ENCODE measurements at regions of chr1 and their contacts with region 1.

Region 1: DNA sequence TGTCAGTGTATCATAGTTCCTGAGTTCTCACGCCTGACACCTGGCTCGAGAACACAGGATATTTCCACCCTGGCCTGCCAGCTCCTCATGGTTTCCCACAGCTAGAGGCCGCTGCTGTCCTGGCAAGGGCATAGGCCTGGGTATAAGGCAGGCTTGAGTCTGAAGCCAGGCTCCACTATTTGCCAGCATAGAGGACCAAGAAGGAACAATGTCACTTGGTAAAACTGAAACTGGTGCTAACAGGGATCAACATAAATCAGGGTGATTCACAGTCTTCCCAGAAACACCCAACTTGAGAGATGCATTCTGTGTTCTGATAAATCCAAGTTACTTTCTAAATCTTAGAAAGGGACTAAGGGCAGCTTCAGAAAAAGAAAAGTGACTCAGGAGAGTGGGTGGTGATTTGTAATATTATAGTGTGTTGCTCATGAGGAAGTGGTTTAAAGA is 6.9 kb upstream of the S100A2 start:
- DNase-seq: peak in 1 of 2 experiments; percentile 43
- H3K4me3 ChIP-seq: no peak overlapping the region
- H3K27ac ChIP-seq: no peak overlapping the region
- H3K4me1 ChIP-seq: peaks cover 4 to 8% (median 7%) of the 10 kb centered on the region in 4 experiments; a peak in 6 of 7 replicates
- H3K27me3 ChIP-seq: 0 out of 7 replicates have a peak, but pooled peaks cover 0 to 4% (median 0%) of the 10 kb centered on the region in 4 experiments
- CTCF ChIP-seq: peak; percentile 91 to 95 (median 92)
- EP300 ChIP-seq: no peak
- POLR2A ChIP-seq: no peak
- RAD21 ChIP-seq: peak; percentile 93 to 97

Region 2: GRCh38 chr1:153526132-153526543 is 46.5 kb before region 1 on chr1:
- CTCF ChIA-PET with region 1: interaction called, 123 read pairs
- POLR2A ChIA-PET with region 1: no interaction called
- DNase-seq: no peak
- H3K4me3 ChIP-seq: no peak overlapping the region
- H3K27ac ChIP-seq: no peak overlapping the region
- H3K4me1 ChIP-seq: peaks cover 3 to 5% (median 5%) of the 10 kb centered on the region in 4 experiments; a peak in 3 of 7 replicates
- H3K27me3 ChIP-seq: no peaks in the 10 kb centered on the region
- CTCF ChIP-seq: no peak
- EP300 ChIP-seq: no peak
- POLR2A ChIP-seq: no peak
- RAD21 ChIP-seq: no peak

Region 3: DNA sequence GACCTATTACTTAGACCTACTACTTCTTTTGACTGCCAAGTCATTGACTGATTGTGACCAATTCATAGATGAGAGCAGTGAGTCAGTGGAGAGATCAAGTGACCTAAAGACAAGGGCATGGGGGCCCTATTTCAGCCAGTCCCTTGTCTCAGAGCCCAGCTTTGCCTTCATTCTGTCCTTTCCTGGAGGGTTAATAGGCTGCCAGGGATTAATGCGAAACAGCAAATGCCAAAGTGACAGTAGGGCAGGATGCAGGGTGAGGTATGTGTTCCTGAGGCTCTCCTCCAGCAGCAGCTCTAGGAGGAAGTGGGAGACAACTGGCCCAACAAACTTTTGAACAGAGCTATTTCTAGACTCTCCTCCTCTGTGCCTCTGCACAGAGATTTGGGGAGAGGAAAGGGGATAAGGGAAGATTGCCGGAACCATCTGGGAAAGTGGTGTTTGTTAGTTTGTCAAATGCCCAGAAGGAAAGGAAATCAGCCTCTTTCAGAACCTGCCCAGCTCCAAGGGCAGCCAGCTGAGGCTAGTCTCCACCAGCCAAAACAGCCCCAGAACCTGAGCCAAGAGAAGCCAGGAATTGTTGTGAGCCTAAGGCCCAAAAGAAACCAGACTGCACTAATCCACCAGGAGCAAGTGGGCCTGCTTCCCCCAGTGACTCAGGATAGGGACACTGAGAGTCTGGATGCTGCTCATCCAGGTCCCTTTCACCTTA is 18.6 kb before region 1 on chr1:
- CTCF ChIA-PET with region 1: interaction called, 38 read pairs
- POLR2A ChIA-PET with region 1: no interaction called
- DNase-seq: no peak
- H3K4me3 ChIP-seq: no peak overlapping the region
- H3K27ac ChIP-seq: no peak overlapping the region
- H3K4me1 ChIP-seq: peaks cover 0 to 9% (median 0%) of the 10 kb centered on the region in 4 experiments; a peak in 1 of 7 replicates
- H3K27me3 ChIP-seq: no peaks in the 10 kb centered on the region; a peak in 2 of 7 replicates
- CTCF ChIP-seq: no peak
- EP300 ChIP-seq: no peak
- POLR2A ChIP-seq: no peak
- RAD21 ChIP-seq: no peak

Region 4: GRCh38 chr1:153617675-153618074 is 45.1 kb after region 1 on chr1:
- CTCF ChIA-PET with region 1: interaction called, 224 read pairs
- POLR2A ChIA-PET with region 1: interaction called, 7 read pairs
- DNase-seq: peak; percentile 54 to 89
- H3K4me3 ChIP-seq: no peak overlapping the region
- H3K27ac ChIP-seq: no peak overlapping the region
- H3K4me1 ChIP-seq: peaks cover 0 to 13% (median 5%) of the 10 kb centered on the region in 4 experiments; a peak in 6 of 7 replicates
- H3K27me3 ChIP-seq: no peaks in the 10 kb centered on the region
- CTCF ChIP-seq: peak; percentile 93 to 99 (median 94)
- EP300 ChIP-seq: no peak
- POLR2A ChIP-seq: no peak
- RAD21 ChIP-seq: peak; percentile 67 to 83

Region 5: GRCh38 chr1:153717330-153717729 is 144.7 kb after region 1 on chr1:
- CTCF ChIA-PET with region 1: no interaction called
- POLR2A ChIA-PET with region 1: no interaction called
- DNase-seq: no peak
- H3K4me3 ChIP-seq: no peak overlapping the region
- H3K27ac ChIP-seq: no peak overlapping the region
- H3K4me1 ChIP-seq: no peaks in the 10 kb centered on the region
- H3K27me3 ChIP-seq: no peaks in the 10 kb centered on the region
- CTCF ChIP-seq: no peak
- EP300 ChIP-seq: no peak
- POLR2A ChIP-seq: no peak
- RAD21 ChIP-seq: no peak

Region 6: DNA sequence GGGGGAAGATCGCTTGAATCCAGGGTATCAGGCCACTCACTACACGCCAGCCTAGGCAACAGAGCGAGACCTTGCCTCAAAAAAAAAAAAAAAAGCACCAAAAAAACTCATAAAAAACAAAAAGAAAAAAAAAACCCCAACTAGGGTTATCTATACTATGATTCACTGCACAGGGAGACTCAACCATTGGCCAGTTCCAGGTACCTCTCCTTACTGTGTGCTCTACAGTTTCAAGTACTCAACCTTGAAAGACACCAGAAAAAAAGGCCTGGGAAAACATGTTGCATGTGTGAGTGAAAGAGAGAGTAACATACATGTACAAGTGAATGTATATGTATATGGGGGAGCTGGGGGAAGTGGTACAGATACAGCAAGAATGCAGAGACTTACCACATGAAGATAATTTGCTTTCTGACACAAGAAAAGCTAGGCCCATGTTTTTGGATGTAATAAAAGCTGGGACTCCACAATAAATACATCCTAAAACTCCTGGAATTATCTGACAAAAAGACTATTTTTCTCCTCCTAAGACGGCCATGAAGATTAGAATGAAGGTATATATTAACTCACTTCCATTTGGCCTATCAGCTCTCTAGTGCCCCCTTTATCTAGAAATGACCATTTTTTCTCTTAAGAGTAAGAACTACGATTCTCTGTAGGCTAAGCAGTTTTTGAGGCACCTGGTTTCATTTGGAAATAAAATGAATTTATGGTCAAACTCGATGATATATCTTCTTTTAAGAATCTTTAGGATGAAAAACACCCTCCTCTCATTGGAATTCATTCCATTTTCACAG is 254.8 kb after region 1 on chr1:
- CTCF ChIA-PET with region 1: no interaction called
- POLR2A ChIA-PET with region 1: no interaction called
- DNase-seq: no peak
- H3K4me3 ChIP-seq: no peak overlapping the region
- H3K27ac ChIP-seq: no peak overlapping the region
- H3K4me1 ChIP-seq: no peaks in the 10 kb centered on the region
- H3K27me3 ChIP-seq: no peaks in the 10 kb centered on the region
- CTCF ChIP-seq: peak in 1 of 3 experiments; percentile 20; a peak in 1 of 4 replicates
- EP300 ChIP-seq: no peak
- POLR2A ChIP-seq: no peak
- RAD21 ChIP-seq: no peak

Measured in H1 (cell line).